ENCODE measurements at regions of chr6 and their contacts with region 1.

Region 1: DNA sequence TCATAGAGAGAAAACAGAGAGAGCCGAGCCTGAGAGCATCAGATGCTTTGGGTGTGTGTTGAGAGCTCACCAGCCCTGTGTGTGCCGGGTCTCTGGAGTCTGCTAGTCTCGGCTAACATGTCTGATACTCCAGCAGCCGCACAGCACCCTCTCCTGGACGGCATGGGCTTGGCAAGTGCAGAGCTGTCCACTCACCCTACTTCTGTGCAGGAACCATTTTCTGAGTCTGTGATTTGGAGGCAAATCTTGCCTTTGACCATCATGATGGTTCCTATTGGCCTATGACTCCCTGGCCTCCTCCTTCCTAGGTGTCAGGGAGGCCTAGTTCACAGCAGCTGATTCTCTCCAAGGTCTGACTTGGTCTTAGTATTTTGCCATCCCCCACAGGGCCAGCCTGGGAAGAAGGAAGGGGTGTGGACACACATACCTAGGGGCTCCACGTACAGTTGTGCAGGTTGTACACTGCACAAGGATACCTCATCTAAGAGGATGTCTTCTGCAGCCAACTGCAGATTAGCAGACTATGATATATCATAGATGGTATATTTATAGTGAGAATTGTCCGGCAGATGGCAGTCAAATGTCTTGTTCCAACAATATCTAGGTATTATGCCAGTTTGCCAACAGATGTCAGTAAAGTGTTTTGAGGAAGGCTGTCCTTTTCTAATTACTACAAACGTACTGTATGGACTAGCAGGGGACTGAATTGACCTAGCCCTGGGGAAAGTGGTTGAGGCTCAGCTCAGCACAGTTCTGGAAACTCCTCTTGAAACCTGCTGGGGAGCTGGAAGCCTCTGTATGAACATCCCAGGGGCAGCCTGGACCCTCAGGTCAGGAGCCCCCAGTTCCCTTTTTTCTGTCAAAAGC is 13.0 kb downstream of the FGD2 start:
- DNase-seq: peak; percentile 94

Region 2: DNA sequence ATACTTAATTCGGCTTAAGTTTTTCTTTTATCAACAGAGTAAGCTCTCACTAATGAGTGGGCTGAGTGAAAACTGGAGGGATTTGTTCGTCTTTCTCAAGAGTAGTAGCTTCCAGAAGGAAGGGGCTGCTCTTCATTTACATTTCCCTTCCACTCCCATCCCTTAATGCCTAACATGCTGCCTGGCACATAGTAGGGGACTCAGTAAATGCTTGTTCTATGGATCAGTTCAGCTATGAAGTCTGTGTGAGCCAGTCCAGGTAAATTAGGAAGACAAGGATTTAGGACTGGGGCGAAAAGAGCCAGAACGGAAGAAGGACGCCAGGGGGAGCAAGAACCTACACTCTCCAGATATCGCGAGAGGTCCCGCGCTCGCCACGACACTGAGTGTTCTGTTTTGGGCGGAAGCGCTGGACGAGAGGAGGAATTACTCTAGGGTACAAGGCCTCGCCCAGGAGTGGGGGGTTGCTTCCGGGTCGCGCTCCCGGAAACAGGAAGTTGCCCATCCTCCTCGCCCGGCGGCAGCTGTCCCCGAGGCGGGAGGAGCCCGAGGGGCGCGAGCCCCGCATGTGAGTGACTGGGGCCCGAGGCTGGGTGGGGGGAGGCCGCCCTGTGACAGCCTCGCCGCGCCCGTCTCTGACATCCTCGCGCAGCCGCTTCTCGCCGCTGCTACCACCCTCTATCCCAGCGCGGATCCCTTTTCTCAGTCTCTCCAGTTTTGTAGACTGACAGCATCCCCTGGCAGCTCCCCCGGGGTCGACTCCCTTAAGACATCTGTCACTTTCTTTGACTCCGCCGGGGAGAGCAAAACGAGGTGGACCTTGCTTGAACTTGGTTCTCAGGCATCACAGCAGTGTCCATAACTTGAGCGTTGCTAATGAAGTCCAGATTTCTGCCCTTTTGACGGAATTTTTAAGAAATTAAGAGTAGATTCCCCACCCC is 132.7 kb before region 1 on chr6 and contains the start of gene C6orf89:
- intact Hi-C with region 1: loop called (anchors 2 kb)
- DNase-seq: peak; percentile 99
- total RNA-seq, gene C6orf89: 49.2 TPM

Region 3: DNA sequence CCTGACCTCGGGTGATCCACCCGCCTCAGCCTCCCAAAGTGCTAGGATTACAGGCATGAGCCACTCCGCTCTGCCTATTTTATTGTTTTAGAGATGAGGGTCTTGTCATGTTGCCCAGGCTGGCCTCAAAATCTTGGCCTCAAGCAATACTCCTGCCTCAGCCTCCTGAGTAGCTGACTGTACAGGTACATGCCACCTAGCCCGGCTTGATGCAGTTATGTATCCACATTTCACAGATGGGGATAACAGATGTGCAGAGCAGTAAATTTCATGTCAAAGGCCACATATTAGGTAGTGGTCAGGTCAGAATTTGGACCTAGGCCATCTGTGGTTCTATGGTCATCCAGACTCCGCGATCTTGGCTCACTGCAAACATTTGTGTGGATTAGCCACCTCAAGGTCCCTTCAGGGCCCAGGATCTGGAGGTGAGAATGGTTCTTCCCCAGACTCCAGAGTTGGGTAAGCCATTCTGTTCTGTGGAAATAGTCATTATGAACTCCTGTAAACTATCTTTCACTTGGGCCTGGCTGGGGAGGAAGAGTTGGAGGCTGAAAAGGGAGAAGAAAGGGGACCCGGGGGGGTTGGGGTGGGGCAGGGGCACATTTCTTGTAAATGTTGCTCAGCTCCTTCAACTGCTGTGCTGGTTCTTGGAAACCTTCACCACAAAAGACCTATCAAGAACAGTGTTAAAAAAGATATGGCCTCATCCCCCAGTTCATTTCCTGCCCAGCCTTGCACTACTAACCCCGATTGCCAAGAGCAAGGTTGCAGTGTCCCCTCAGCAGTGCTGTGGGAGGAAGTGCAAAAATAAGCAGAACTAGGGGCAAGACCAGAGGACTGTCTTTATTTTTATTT is 164.5 kb after region 1 on chr6:
- intact Hi-C with region 1: no loop called
- DNase-seq: no peak